Activated CD4-positive, alpha-beta T cell treated with anti-CD3 and anti-CD28 coated beads for 36 hours (primary cell): ENCODE measurements at regions of chr14 and their contacts with region 1.

Region 1: DNA sequence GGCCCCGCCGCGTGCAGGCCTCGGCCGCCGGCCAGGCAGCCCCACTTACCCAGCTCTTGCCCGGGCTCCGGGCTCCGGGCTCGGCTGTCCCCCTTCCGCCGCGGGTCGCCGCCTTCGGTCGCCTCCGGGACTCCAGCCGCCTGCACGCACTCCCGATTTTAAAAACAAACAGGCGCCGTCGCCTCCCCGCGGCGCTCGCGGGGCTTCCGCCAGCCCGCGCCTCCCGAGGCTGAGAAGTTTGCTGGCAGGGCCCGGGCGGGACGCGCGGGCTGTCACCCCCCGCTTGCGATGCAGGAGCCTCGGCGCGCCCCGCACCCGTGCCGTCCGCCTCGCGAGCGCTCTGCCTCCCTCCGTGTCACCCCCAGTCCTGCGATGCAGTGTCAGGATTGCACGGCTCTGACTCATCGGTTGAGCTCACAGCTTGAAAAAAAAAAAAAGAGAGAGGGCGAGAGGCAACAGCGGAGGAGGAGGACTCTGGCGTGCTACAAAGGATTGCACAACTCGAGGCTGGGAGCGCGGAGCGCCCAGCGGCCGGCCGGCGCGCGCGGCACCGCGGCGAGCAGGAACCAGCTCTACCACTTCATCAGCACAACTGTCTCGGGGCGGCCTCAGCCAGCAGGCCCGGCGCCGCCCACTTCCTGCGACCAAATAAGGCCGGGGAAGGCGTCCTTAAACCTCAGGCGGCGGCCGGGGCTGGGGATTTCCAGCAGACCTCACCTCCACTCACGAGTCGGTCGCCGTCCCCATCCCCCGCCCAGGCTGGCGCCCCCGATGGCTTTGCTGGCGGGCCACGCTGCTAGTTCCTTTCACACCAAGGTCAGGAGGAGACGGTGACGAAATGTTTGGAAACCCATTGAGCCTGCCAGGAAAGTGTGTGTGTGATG is 45.8 kb upstream of the PNMA1 start:
- DNase-seq: peak; percentile 98
- ATAC-seq: peak; percentile 74
- H3K4me3 Mint-ChIP-seq: peak overlapping the region; percentile 83
- H3K27ac Mint-ChIP-seq: peak overlapping the region; percentile 99
- H3K4me1 Mint-ChIP-seq: peaks cover 76% of the 10 kb centered on the region
- H3K27me3 Mint-ChIP-seq: no peaks in the 10 kb centered on the region

Region 2: DNA sequence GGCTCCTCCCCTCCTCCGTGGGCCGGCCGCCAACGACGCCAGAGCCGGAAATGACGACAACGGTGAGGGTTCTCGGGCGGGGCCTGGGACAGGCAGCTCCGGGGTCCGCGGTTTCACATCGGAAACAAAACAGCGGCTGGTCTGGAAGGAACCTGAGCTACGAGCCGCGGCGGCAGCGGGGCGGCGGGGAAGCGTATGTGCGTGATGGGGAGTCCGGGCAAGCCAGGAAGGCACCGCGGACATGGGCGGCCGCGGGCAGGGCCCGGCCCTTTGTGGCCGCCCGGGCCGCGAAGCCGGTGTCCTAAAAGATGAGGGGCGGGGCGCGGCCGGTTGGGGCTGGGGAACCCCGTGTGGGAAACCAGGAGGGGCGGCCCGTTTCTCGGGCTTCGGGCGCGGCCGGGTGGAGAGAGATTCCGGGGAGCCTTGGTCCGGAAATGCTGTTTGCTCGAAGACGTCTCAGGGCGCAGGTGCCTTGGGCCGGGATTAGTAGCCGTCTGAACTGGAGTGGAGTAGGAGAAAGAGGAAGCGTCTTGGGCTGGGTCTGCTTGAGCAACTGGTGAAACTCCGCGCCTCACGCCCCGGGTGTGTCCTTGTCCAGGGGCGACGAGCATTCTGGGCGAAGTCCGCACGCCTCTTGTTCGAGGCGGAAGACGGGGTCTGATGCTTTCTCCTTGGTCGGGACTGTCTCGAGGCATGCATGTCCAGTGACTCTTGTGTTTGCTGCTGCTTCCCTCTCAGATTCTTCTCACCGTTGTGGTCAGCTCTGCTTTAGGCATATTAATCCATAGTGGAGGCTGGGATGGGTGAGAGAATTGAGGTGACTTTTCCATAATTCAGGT is 623.4 kb before region 1 on chr14 and contains the start of gene PSEN1:
- CTCF ChIA-PET with region 1: no interaction called
- POLR2A ChIA-PET with region 1: no interaction called
- intact Hi-C with region 1: loop called in 1 of 2 experiments (anchors 2 kb)
- DNase-seq: peak; percentile 99
- ATAC-seq: peak; percentile 95
- H3K4me3 Mint-ChIP-seq: peak within 1 kb of the TSS; percentile 86
- H3K27ac Mint-ChIP-seq: peak within 1 kb of the TSS; percentile 82
- H3K4me1 Mint-ChIP-seq: peaks cover 31% of the 10 kb centered on the region
- H3K27me3 Mint-ChIP-seq: no peaks in the 10 kb centered on the region
- total RNA-seq, gene PSEN1: 31.2 to 31.6 TPM

Region 3: DNA sequence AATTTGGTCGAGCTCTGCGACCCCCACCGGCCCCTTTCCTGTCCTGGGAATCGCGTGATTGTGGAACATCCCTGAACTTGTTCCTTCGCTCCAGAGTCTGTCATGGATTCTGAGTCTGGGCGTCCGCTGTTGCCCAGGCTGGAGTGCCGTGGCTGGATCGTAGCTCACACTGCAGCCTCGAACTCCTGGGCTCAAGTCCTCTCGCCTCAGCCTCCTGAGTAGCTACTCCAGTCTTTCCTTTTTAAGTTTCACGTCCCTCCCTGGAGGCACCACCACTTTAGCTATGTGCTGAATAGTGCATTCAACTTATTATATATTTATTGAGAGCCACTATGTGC is 146.9 kb before region 1 on chr14:
- CTCF ChIA-PET with region 1: no interaction called
- POLR2A ChIA-PET with region 1: no interaction called
- intact Hi-C with region 1: loop called in 1 of 2 experiments (anchors 1 kb)
- DNase-seq: no peak
- ATAC-seq: peak; percentile 2
- H3K4me3 Mint-ChIP-seq: peak overlapping the region; percentile 76
- H3K27ac Mint-ChIP-seq: peak overlapping the region; percentile 80
- H3K4me1 Mint-ChIP-seq: peaks cover 6% of the 10 kb centered on the region
- H3K27me3 Mint-ChIP-seq: no peaks in the 10 kb centered on the region

Region 4: DNA sequence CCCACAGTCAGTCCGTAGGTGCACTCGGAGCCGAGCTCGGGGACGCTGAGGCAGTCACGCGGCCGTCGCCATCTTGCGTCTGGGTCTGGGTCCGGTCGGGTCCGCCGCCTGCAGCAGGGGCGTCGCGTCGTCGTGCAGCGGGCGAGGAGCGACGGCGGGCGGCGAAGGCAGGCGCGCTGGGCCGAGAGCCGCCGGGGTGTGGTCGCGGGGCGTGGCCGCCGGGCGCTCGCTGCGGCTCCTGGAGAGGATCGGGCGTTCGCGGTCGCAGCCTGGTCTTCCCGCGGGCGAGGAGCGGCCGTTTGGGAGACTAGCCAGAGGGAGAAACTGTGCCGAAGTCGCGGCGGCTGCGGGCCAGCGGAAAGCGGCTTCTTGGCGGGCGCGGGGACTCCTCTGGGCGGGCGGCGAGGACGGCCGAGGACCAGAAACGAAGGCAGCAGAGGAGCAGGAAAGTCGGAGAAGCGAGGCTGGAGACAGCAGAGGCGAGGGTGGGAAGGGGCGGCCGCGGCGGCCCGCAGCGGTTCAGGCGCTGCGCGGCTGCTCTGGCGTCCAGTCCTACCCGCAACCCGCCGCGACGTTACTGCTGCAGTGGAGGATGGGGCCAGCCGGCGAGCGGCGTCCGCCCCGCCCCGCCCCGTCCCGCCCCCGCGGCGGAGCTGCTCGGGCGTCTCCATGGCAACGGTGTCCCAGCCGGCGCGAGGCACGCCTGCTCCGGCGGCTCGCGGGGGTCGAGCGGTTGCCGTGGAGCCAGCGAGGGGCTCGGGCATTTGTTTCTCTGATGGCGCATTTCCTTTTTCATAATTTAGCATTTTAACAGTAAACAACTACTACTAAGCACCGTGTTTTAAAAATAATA is 45.9 kb before region 1 on chr14 and contains the start of gene PNMA1:
- CTCF ChIA-PET with region 1: interaction called, 6 read pairs
- POLR2A ChIA-PET with region 1: no interaction called
- intact Hi-C with region 1: loop called in 1 of 2 experiments (anchors 1 kb)
- DNase-seq: peak; percentile 92
- ATAC-seq: peak; percentile 79
- H3K4me3 Mint-ChIP-seq: peak within 1 kb of the TSS; percentile 98
- H3K27ac Mint-ChIP-seq: peak within 1 kb of the TSS; percentile 94
- H3K4me1 Mint-ChIP-seq: peaks cover 13% of the 10 kb centered on the region
- H3K27me3 Mint-ChIP-seq: no peaks in the 10 kb centered on the region
- total RNA-seq, gene PNMA1: 23.2 to 28.8 TPM

Region 5: GRCh38 chr14:73741386-73741875 is 18.5 kb before region 1 on chr14:
- CTCF ChIA-PET with region 1: interaction called, 116 read pairs
- POLR2A ChIA-PET with region 1: interaction called, 9 read pairs
- intact Hi-C with region 1: loop called (anchors 1 kb)
- DNase-seq: peak; percentile 85
- ATAC-seq: peak; percentile 80
- H3K4me3 Mint-ChIP-seq: peak overlapping the region; percentile 66
- H3K27ac Mint-ChIP-seq: peak overlapping the region; percentile 82
- H3K4me1 Mint-ChIP-seq: peaks cover 65% of the 10 kb centered on the region
- H3K27me3 Mint-ChIP-seq: no peaks in the 10 kb centered on the region

Region 6: DNA sequence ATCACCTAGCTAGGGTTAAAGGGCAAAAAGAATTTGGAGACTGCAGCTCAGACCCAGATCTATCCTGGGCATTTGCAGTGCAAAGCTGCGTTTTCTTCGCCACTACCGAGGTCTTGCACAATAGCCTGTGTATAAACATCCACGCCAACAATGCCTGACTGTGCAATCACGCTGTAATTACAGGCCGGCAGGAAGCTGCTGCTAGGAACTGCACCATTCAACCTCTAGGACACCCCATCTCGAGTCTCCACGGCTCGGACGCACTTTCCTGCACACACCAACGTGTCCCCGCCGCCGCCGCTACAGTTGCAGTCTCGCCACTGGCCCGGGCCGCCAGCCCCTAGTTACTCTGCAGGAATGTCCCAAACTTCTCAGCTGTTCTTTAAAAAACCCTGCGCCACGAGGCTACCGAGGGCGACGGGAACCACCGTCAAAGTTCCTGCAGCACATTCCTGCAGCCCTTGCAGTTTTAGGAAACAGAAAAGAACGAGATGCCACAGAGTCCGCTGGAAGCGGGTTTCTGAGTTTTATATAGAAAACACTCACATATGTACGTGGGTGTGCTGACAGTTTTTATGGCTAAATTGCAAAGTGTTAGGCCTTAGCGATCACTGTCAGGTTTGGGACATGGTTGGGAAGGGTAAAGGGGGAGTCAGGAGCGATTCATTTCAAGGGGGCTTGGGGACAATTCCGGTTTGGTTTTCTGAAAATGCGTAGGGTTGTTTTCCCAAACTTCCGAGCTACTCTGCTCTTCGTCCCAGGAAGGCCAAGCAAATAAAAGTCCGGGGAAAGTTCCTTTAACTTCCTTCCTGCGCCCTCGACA is 26.1 kb after region 1 on chr14:
- CTCF ChIA-PET with region 1: interaction called, 68 read pairs
- POLR2A ChIA-PET with region 1: interaction called, 43 read pairs
- intact Hi-C with region 1: loop called (anchors 1 kb)
- DNase-seq: peak; percentile 81
- ATAC-seq: peak; percentile 67
- H3K4me3 Mint-ChIP-seq: peak overlapping the region; percentile 94
- H3K27ac Mint-ChIP-seq: peak overlapping the region; percentile 93
- H3K4me1 Mint-ChIP-seq: peaks cover 56% of the 10 kb centered on the region
- H3K27me3 Mint-ChIP-seq: no peaks in the 10 kb centered on the region

Region 7: GRCh38 chr14:73851644-73852382 is 91.9 kb after region 1 on chr14 and contains the start of gene PTGR2:
- CTCF ChIA-PET with region 1: interaction called, 4 read pairs
- POLR2A ChIA-PET with region 1: interaction called, 7 read pairs
- intact Hi-C with region 1: loop called in 1 of 2 experiments (anchors 1 kb)
- DNase-seq: peak; percentile 94
- ATAC-seq: peak; percentile 94
- H3K4me3 Mint-ChIP-seq: peak within 1 kb of the TSS; percentile 98
- H3K27ac Mint-ChIP-seq: peak within 1 kb of the TSS; percentile 100
- H3K4me1 Mint-ChIP-seq: peaks cover 24% of the 10 kb centered on the region
- H3K27me3 Mint-ChIP-seq: no peaks in the 10 kb centered on the region
- total RNA-seq, gene PTGR2: 12.6 to 14.3 TPM

Region 8: DNA sequence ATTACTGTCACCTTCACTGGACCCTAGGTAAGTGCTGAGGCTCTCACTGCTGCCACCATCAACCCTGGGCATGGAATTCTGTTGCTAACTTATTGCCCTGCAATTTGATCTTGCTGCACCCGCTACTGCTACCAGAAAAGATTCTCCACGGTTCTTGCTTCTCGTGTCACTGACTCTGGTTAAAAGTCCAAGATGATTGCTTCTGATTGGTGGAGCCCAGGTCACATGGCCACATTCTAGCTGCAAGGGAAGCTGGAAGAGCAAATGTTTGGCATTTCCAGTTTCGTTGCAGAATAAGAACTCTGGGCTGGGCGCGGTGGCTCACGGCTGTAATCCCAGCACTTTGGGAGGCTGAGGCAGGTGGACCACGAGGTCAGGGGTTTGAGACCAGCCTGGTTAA is 471.8 kb after region 1 on chr14:
- CTCF ChIA-PET with region 1: no interaction called
- POLR2A ChIA-PET with region 1: no interaction called
- intact Hi-C with region 1: no loop called
- DNase-seq: no peak
- ATAC-seq: no peak
- H3K4me3 Mint-ChIP-seq: no peak overlapping the region
- H3K27ac Mint-ChIP-seq: no peak overlapping the region
- H3K4me1 Mint-ChIP-seq: no peaks in the 10 kb centered on the region
- H3K27me3 Mint-ChIP-seq: peaks cover 17% of the 10 kb centered on the region